ENCODE measurements at regions of chr10 and their contacts with region 1.

Region 1: GRCh38 chr10:3972460-3973301 is 187.7 kb upstream of the KLF6 start:
- DNase-seq: peak; percentile 68
- H3K4me3 Mint-ChIP-seq: peak overlapping the region; percentile 66
- H3K27ac Mint-ChIP-seq: peak overlapping the region; percentile 96
- H3K4me1 Mint-ChIP-seq: peaks cover 49% of the 10 kb centered on the region
- H3K27me3 Mint-ChIP-seq: no peaks in the 10 kb centered on the region

Region 2: DNA sequence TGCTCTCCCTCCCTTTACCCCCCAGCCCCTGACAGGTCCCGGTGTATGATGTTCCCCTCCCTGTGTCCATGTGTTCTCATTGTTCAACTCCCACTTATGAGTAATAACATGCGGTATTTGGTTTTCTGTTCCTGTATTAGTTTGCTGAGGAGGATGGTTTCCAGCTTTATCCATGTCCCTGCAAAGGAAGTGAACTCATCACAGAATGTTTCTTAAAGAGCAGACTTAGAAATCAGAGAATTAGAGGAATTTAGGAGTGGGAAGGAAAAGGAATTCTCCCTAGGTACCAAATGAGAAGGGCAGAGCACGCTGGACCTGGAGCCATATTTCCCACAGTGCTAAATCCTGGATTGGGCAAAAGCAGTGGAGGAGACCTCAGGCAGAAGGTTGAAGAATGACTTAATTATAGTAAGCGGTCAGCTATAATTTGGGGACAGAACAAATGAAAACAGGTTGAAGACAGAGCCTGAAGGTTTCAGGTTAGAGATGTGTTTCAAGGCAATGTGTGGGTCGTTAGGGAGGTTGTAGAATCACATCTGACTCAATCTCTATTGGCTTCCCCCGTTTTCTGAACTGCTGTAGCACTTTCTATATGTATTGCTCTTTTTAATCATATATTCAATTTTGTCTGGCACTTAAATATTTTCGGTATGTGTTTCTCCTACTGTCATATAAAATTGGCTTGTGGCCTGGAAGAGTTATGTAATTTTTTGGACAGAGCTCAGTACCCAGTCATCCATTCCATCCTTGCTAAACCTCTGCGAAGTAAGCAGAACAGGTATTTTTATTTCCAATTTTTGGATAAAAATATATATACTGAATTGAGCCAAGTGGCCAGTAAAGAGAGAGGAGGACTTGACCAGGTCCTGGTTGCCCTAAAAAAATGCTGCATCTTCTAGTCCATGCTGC is 22.9 kb after region 1 on chr10:
- CTCF ChIA-PET with region 1: no interaction called
- POLR2A ChIA-PET with region 1: no interaction called
- intact Hi-C with region 1: loop called (anchors 2 kb)
- DNase-seq: no peak
- H3K4me3 Mint-ChIP-seq: no peak overlapping the region
- H3K27ac Mint-ChIP-seq: no peak overlapping the region
- H3K4me1 Mint-ChIP-seq: peaks cover 9% of the 10 kb centered on the region
- H3K27me3 Mint-ChIP-seq: no peaks in the 10 kb centered on the region

Region 3: DNA sequence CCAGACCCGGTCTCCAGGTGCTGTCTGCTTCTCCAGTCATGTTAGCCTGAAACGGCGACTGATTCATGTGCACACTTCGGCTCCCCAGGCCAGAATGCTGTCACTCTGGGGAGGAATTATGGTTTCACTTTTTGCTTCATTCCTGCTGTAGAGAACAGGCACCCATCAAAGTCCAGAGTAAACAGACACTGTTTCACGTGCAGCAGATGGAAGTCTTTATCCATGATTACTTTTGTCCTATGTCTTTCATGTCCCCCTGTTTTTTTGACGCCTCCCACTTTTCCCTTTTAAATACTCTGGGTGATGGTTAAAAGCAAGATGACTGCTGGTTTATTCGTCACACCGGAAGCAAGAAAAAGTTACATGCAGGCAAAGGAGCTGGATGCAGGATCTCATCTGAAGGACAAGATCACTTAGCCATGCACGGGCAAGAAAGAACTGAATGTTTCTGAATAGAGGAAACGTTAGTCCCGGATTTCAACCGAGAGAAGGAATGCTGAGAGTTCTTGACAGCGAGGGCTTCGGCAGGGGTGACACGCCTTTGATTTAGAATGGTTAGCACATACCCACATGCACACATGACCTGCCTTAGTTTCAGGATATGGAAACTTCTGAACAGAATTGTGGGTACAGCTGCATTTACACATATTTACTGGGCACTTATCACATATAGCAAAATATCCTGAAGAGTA is 62.4 kb after region 1 on chr10:
- CTCF ChIA-PET with region 1: no interaction called
- POLR2A ChIA-PET with region 1: no interaction called
- intact Hi-C with region 1: loop called (anchors 2 kb)
- DNase-seq: peak; percentile 48
- H3K4me3 Mint-ChIP-seq: peak overlapping the region; percentile 2
- H3K27ac Mint-ChIP-seq: peak overlapping the region; percentile 32
- H3K4me1 Mint-ChIP-seq: peaks cover 33% of the 10 kb centered on the region
- H3K27me3 Mint-ChIP-seq: no peaks in the 10 kb centered on the region

Region 4: DNA sequence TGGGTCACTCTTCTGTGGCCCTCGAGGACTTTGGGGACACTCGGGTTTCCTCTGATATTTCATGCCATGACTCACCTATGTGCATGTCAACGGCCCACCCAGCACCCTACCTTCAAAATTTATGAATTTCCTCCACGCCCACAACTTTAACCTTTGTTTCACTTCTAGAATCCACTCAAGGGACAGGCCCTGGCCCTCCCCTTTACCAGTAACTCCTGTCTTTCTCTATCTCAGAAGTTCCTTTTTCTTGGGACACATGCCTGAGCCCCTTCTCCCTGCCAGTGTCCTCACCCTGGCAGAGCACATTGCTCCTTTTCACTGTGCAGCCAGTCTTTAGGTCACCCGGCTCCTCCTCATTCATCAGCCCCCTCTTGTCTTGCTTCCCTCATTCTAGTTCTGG is 94.8 kb after region 1 on chr10:
- CTCF ChIA-PET with region 1: no interaction called
- POLR2A ChIA-PET with region 1: no interaction called
- intact Hi-C with region 1: loop called (anchors 2 kb)
- DNase-seq: peak; percentile 57
- H3K4me3 Mint-ChIP-seq: no peak overlapping the region
- H3K27ac Mint-ChIP-seq: no peak overlapping the region
- H3K4me1 Mint-ChIP-seq: peaks cover 3% of the 10 kb centered on the region
- H3K27me3 Mint-ChIP-seq: no peaks in the 10 kb centered on the region

Region 5: DNA sequence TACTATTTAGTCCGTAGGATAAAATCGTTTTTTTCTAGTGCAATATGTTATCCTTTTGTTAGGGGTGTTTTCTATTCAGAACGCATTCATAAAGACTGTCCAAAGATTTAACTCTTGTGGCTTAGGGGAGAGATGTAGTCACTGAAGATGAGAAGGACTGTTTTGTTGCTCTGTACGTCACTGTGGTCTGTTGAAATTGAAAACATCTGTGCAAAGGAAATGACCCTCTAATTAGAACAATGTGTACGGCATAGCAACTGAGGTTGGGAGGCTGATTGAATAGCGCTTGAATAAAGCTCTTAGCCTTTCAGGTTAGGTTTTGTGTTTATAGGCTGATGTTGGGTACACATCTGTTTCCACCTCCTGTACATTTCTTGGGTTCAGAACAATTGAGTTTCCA is 399.9 kb after region 1 on chr10:
- CTCF ChIA-PET with region 1: no interaction called
- POLR2A ChIA-PET with region 1: no interaction called
- intact Hi-C with region 1: no loop called
- DNase-seq: no peak
- H3K4me3 Mint-ChIP-seq: no peak overlapping the region
- H3K27ac Mint-ChIP-seq: no peak overlapping the region
- H3K4me1 Mint-ChIP-seq: no peaks in the 10 kb centered on the region
- H3K27me3 Mint-ChIP-seq: no peaks in the 10 kb centered on the region

Measured in activated CD4-positive, alpha-beta memory T cell treated with anti-CD3 and anti-CD28 coated beads for 36 hours (primary cell).